Activated CD4-positive, alpha-beta T cell treated with anti-CD3 and anti-CD28 coated beads, Interleukin-2, amount 10 ng/mL, durations not matched to agents 24 days and 14 days (primary cell): ENCODE measurements at regions of chr3 and their contacts with region 1.

Region 1: GRCh38 chr3:111539351-111540331 is 2.4 kb upstream of the CD96 start:
- DNase-seq: peak; percentile 89
- H3K4me3 Mint-ChIP-seq: peak overlapping the region; percentile 79
- H3K27ac Mint-ChIP-seq: peak overlapping the region; percentile 89
- H3K4me1 Mint-ChIP-seq: peaks cover 74% of the 10 kb centered on the region
- H3K27me3 Mint-ChIP-seq: no peaks in the 10 kb centered on the region

Region 2: DNA sequence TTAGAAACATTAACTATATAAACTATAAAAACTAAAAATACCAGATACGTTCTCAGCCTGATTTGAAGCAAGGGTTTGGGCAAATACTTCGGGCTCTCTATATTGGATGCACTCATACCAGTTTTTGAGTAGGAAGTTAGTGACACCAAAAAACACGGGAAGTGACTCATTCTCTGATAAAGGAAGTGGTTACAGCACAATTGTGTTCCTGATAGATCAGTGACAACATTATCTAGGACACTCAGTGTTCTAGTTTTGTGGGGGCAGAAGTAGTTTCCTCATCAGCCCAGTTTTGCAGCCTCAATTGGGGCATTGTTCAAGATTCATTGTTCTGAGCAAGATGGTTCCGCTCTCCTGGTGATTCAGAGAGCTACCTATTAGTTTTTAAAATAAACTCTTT is 1732.7 kb before region 1 on chr3:
- intact Hi-C with region 1: loop called (anchors 2 kb)
- DNase-seq: peak; percentile 84
- H3K4me3 Mint-ChIP-seq: peak overlapping the region; percentile 54
- H3K27ac Mint-ChIP-seq: peak overlapping the region; percentile 57
- H3K4me1 Mint-ChIP-seq: peaks cover 31% of the 10 kb centered on the region
- H3K27me3 Mint-ChIP-seq: peaks cover 7% of the 10 kb centered on the region

Region 3: GRCh38 chr3:111238885-111239284 is 300.8 kb before region 1 on chr3:
- intact Hi-C with region 1: loop called (anchors 1 kb)
- DNase-seq: peak; percentile 85
- H3K4me3 Mint-ChIP-seq: peak overlapping the region; percentile 34
- H3K27ac Mint-ChIP-seq: peak overlapping the region; percentile 52
- H3K4me1 Mint-ChIP-seq: peaks cover 37% of the 10 kb centered on the region
- H3K27me3 Mint-ChIP-seq: no peaks in the 10 kb centered on the region

Region 4: GRCh38 chr3:111326144-111326995 is 213.3 kb before region 1 on chr3:
- intact Hi-C with region 1: loop called (anchors 1 kb)
- DNase-seq: no peak
- H3K4me3 Mint-ChIP-seq: peak overlapping the region; percentile 3
- H3K27ac Mint-ChIP-seq: peak overlapping the region; percentile 67
- H3K4me1 Mint-ChIP-seq: peaks cover 29% of the 10 kb centered on the region
- H3K27me3 Mint-ChIP-seq: no peaks in the 10 kb centered on the region

Region 5: GRCh38 chr3:111616417-111617105 is 76.9 kb after region 1 on chr3:
- intact Hi-C with region 1: loop called (anchors 1 kb)
- DNase-seq: peak; percentile 88
- H3K4me3 Mint-ChIP-seq: peak overlapping the region; percentile 59
- H3K27ac Mint-ChIP-seq: peak overlapping the region; percentile 92
- H3K4me1 Mint-ChIP-seq: peaks cover 71% of the 10 kb centered on the region
- H3K27me3 Mint-ChIP-seq: no peaks in the 10 kb centered on the region

Region 6: GRCh38 chr3:112498914-112499711 is 959.5 kb after region 1 on chr3 and contains the start of gene BTLA:
- intact Hi-C with region 1: loop called (anchors 10 kb)
- DNase-seq: peak; percentile 81
- H3K4me3 Mint-ChIP-seq: peak within 1 kb of the TSS; percentile 97
- H3K27ac Mint-ChIP-seq: peak within 1 kb of the TSS; percentile 94
- H3K4me1 Mint-ChIP-seq: peaks cover 50% of the 10 kb centered on the region
- H3K27me3 Mint-ChIP-seq: no peaks in the 10 kb centered on the region
- total RNA-seq, gene BTLA: 33.7 and 36.0 TPM in 2 replicates